SK-N-SH (cell line): ENCODE measurements at regions of chr16 and their contacts with region 1.

Region 1: GRCh38 chr16:87581833-87582203 is 20.5 kb upstream of the JPH3 start:
- DNase-seq: peak; percentile 58
- H3K4me3 ChIP-seq: peak overlapping the region in 1 of 2 experiments; percentile 50; a peak in 1 of 4 replicates
- H3K27ac ChIP-seq: peak overlapping the region; percentile 48 to 99; a peak in 3 of 4 replicates
- H3K4me1 ChIP-seq: peaks cover 14 to 19% of the 10 kb centered on the region in 2 experiments; a peak in 3 of 4 replicates
- H3K27me3 ChIP-seq: no peaks in the 10 kb centered on the region
- CTCF ChIP-seq: no peak
- EP300 ChIP-seq: peak in 1 of 2 experiments; percentile 75; a peak in 1 of 4 replicates
- RAD21 ChIP-seq: no peak

Region 2: GRCh38 chr16:87602821-87603683 is 21.2 kb after region 1 on chr16:
- CTCF ChIA-PET with region 1: interaction called, 38 read pairs
- POLR2A ChIA-PET with region 1: no interaction called
- DNase-seq: peak; percentile 83
- H3K4me3 ChIP-seq: peak overlapping the region in 1 of 2 experiments; percentile 53; a peak in 2 of 4 replicates
- H3K27ac ChIP-seq: peak overlapping the region in 1 of 2 experiments; percentile 19; a peak in 1 of 4 replicates
- H3K4me1 ChIP-seq: peaks cover 0 to 25% of the 10 kb centered on the region in 2 experiments; a peak in 1 of 4 replicates
- H3K27me3 ChIP-seq: peaks cover 69% of the 10 kb centered on the region
- CTCF ChIP-seq: no peak
- EP300 ChIP-seq: no peak
- RAD21 ChIP-seq: no peak